ENCODE measurements at regions of chr9 and their contacts with region 1.

Region 1: GRCh38 chr9:86354011-86354817 is at the start of gene TUT7:
- DNase-seq: peak; percentile 97
- ATAC-seq: peak; percentile 91
- H3K4me3 Mint-ChIP-seq: peak within 1 kb of the TSS; percentile 93
- H3K27ac Mint-ChIP-seq: peak within 1 kb of the TSS; percentile 99
- H3K4me1 Mint-ChIP-seq: peaks cover 26% of the 10 kb centered on the region
- H3K27me3 Mint-ChIP-seq: no peaks in the 10 kb centered on the region
- total RNA-seq, gene TUT7: 31.5 to 39.2 TPM

Region 2: GRCh38 chr9:85940832-85941621 is 413.2 kb before region 1 on chr9 and contains the start of gene NAA35:
- CTCF ChIA-PET with region 1: no interaction called
- POLR2A ChIA-PET with region 1: no interaction called
- intact Hi-C with region 1: loop called (anchors 1 to 2 kb)
- DNase-seq: peak; percentile 99
- ATAC-seq: peak; percentile 88
- H3K4me3 Mint-ChIP-seq: no peak within 1 kb of the TSS
- H3K27ac Mint-ChIP-seq: peak within 1 kb of the TSS; percentile 95
- H3K4me1 Mint-ChIP-seq: peaks cover 8% of the 10 kb centered on the region
- H3K27me3 Mint-ChIP-seq: no peaks in the 10 kb centered on the region
- total RNA-seq, gene NAA35: 24.9 to 25.8 TPM

Region 3: GRCh38 chr9:86282077-86282978 is 71.9 kb before region 1 on chr9 and contains the start of gene ISCA1:
- CTCF ChIA-PET with region 1: interaction called, 3 read pairs
- POLR2A ChIA-PET with region 1: interaction called, 4 read pairs
- intact Hi-C with region 1: loop called (anchors 1 kb)
- DNase-seq: peak; percentile 99
- ATAC-seq: peak; percentile 86
- H3K4me3 Mint-ChIP-seq: peak within 1 kb of the TSS; percentile 82
- H3K27ac Mint-ChIP-seq: peak within 1 kb of the TSS; percentile 95
- H3K4me1 Mint-ChIP-seq: peaks cover 42% of the 10 kb centered on the region
- H3K27me3 Mint-ChIP-seq: no peaks in the 10 kb centered on the region
- total RNA-seq, gene ISCA1: 27.1 to 27.4 TPM

Region 4: DNA sequence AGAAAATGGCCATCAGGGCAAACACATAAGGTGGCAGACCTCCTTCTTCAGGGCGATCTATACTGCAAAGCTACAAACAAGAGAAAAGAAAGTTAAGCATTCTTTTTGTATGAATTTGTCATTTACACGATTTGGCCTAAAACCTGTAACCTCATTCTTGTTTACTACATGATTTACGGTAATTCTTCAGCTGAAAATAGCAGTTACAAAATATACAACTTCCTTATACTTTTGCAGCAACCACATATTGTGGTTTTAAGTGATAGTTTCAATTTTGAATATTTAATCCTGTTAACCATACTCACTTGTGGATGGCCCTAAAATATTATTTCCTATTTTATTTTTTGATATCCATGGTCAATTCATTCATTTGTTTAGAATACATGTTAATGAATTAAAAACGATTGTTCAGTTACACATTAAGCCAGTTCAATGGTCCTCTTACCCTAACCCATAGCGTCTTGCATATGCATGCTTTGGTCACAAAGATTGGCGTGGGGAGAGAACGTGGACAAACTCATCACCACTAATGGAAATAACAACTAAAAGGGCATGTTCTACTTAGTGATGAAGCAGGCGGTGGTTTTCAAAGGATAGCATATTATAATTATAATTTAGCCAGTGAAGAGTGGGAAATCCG is 16.6 kb before region 1 on chr9:
- CTCF ChIA-PET with region 1: interaction called, 15 read pairs
- POLR2A ChIA-PET with region 1: no interaction called
- intact Hi-C with region 1: loop called (anchors 1 to 2 kb)
- DNase-seq: no peak
- ATAC-seq: no peak
- H3K4me3 Mint-ChIP-seq: no peak overlapping the region
- H3K27ac Mint-ChIP-seq: peak overlapping the region; percentile 42
- H3K4me1 Mint-ChIP-seq: peaks cover 44% of the 10 kb centered on the region
- H3K27me3 Mint-ChIP-seq: no peaks in the 10 kb centered on the region

Region 5: DNA sequence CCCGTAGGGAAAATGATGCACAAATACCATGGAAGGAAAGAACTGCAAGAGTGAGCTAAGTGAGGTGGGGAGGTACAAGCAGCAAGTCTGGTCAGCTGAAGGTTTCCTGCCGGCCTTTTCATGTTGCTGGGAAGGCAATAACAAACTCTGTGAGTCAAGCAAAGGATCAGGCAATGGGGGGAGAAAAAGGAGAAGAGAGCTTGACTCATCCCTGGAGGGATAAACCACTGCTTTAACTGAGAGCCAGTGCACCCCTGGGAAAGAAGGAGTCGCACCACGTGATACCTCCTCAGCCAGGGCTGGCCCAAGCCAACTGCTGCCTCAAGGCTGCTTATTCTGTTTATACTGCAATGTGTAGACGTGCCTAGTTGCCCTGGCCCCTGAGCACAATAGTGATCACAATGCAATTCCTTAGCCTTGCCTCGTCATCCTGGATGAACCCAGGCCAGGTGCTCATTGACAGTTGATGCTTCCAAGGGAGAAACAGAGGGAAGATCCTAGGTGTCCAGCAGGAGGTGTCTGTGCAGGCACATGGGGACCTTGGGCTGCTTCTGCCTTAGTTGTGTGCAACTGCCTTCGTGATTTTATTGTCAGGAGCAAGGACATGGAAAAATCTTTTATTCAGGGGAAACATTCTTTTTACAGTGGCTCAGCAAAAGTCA is 203.0 kb after region 1 on chr9:
- CTCF ChIA-PET with region 1: no interaction called
- POLR2A ChIA-PET with region 1: no interaction called
- intact Hi-C with region 1: no loop called
- DNase-seq: no peak
- ATAC-seq: no peak
- H3K4me3 Mint-ChIP-seq: no peak overlapping the region
- H3K27ac Mint-ChIP-seq: no peak overlapping the region
- H3K4me1 Mint-ChIP-seq: no peaks in the 10 kb centered on the region
- H3K27me3 Mint-ChIP-seq: peaks cover 22% of the 10 kb centered on the region

Region 6: DNA sequence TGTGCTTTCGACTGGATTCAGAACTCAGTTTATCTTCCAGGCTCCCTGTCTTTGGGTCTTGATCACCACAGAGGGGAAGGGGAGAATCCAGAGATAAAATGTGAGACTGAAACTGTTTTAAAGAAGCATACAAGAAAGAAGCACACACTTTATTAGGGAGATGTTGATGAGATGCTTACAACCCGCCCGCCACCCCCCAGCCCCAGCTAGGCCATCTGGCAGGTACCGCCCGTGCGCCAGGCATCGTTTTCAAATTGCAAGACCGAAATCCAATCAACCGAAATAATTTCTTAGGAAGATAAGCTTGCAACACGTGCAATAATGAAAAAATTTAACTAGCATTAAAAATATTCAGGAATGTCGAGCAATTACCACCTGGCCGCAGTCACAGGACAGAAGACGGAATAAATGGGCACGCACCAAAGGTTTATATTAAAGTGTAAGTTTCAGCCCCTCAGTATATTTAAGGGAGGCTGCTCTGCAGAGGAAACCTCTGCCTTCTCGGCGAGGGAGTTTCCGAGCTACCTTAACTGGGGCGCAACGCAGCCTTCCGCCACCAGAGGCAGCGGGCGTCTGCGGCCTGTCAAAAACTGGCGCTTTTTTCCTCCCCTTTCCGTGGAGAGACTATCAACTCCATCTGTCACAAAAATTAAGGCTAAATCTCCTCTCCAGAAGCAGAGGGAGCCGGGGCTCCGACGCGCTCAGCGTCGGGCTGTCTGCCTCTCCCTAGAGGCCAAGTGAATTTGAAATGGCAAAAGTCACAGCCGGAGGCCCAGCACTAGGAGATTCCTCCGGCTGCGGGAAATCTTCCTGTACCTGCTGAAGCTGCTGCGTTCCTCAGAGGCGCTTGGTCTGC is 594.1 kb after region 1 on chr9:
- CTCF ChIA-PET with region 1: no interaction called
- POLR2A ChIA-PET with region 1: no interaction called
- intact Hi-C with region 1: loop called in 1 of 2 experiments (anchors 5 kb)
- DNase-seq: peak; percentile 85
- ATAC-seq: peak; percentile 55
- H3K4me3 Mint-ChIP-seq: peak overlapping the region; percentile 74
- H3K27ac Mint-ChIP-seq: no peak overlapping the region
- H3K4me1 Mint-ChIP-seq: peaks cover 9% of the 10 kb centered on the region
- H3K27me3 Mint-ChIP-seq: peaks cover 16% of the 10 kb centered on the region

Region 7: DNA sequence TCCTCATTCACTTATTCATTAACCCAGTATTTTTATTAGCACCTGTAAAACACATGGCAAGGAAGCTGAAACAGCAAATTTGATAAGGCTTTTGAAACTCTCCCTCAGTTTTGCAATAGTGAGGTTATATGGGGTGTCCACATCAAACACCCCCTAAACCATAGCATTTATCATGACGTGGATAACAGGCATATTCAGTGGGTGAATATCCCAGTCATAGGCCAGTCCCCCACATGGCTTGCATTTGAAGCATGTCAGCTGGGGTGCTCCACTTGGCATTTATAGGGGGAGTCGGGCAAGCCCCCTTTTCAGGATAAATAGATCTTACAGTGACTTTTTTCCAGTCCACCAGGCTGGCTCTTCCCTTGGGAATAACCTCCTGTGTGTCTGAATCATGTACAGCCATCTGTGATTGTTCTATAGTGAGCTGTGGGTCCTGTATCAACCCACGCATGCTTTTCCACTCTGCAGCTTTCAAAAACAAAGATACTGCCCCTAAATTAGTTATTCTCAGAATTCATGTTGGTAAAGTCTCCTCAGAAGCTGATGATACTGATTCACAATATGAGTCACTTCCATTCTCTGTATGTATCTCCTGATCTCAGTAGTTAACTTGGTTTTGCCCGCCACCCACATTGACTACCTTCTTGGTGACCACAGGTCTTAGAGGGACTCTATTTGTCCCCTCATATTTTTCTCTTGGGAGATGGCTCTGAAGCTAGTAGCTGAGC is 1949.7 kb after region 1 on chr9:
- CTCF ChIA-PET with region 1: no interaction called
- POLR2A ChIA-PET with region 1: no interaction called
- intact Hi-C with region 1: loop called in 1 of 2 experiments (anchors 10 kb)
- DNase-seq: peak; percentile 81
- ATAC-seq: peak; percentile 91
- H3K4me3 Mint-ChIP-seq: no peak overlapping the region
- H3K27ac Mint-ChIP-seq: peak overlapping the region; percentile 68
- H3K4me1 Mint-ChIP-seq: peaks cover 27% of the 10 kb centered on the region
- H3K27me3 Mint-ChIP-seq: peaks cover 18% of the 10 kb centered on the region

Measured in activated CD4-positive, alpha-beta T cell treated with anti-CD3 and anti-CD28 coated beads for 36 hours (primary cell).